Prostate gland (tissue), 2 donors: ENCODE measurements at regions of chr13 and their contacts with region 1.

Region 1: DNA sequence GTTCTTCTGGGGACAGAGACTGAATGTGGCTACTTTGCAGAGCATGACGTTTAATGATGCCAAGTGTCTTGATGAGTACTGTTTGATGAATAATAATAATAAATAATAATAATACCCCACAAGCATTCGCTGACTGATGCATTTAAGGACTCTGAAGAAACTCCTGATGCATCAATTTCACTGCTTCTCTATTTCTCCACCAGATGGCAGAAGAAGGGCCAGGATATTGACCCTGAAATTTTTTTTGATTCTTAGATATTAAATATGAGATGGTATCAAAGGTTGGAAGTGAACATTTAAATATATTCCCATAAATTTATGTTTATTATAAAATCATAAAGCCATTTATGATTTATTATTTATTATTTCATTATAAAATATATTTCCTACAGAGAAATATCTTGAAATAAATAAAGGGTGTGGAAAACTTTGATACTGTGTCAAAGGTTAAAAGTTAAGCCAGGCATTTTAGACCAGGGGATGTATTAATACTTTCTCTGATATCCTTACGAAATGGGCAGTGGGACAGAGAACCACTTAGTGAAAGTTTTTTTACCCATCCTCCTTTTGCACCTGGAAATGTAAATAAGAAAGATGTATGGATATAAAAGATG is 170.9 kb downstream of the LACC1 start:
- DNase-seq: no peak
- H3K4me3 ChIP-seq: no peak overlapping the region
- H3K27ac ChIP-seq: peak overlapping the region in 1 of 2 donors; percentile 15
- H3K4me1 ChIP-seq: no peaks in the 10 kb centered on the region
- H3K27me3 ChIP-seq: no peaks in the 10 kb centered on the region
- CTCF ChIP-seq: peak; percentile 50 to 86 (median 72)
- POLR2A ChIP-seq: no peak

Region 2: DNA sequence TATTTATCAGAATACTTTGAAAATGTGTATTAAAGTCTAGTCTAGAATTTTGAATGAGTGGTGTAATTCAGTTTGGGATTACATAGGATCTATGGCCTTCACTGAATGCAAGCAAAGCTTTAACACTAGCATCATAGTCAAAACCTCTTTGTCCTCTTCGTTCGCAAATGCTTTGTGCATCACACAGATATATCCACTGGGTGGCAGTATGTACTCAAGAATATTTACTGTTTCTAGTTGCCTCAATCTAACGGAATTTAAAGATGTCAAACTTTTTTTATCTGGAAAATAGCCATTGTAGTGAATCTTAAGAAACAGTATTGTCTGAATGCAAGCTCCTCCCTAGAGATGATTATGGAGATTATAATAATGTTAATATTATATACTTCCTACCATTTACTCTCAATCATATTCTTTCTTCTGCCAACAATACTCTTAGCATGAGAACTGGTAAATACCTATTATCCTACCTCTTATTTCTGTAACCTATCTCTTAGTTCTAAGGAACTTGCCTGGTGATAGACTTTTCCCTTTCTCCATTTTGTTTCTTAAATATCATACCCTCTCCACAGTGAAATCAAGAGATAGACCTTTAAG is 145.0 kb before region 1 on chr13:
- intact Hi-C with region 1: loop called (anchors 5 kb)
- DNase-seq: peak; percentile 53
- H3K4me3 ChIP-seq: no peak overlapping the region
- H3K27ac ChIP-seq: no peak overlapping the region
- H3K4me1 ChIP-seq: no peaks in the 10 kb centered on the region
- H3K27me3 ChIP-seq: no peaks in the 10 kb centered on the region
- CTCF ChIP-seq: peak in 3 of 4 experiments; percentile 73 to 90 (median 89)
- POLR2A ChIP-seq: no peak

Region 3: GRCh38 chr13:44141725-44142539 is 91.4 kb after region 1 on chr13:
- intact Hi-C with region 1: loop called (anchors 5 kb)
- DNase-seq: peak; percentile 96
- H3K4me3 ChIP-seq: peak overlapping the region; percentile 46 to 47
- H3K27ac ChIP-seq: peak overlapping the region; percentile 93 to 95
- H3K4me1 ChIP-seq: peaks cover 6% of the 10 kb centered on the region
- H3K27me3 ChIP-seq: no peaks in the 10 kb centered on the region
- CTCF ChIP-seq: peak in 2 of 4 experiments; percentile 50 to 52
- POLR2A ChIP-seq: peak; percentile 89